ENCODE measurements at regions of chr10 and their contacts with region 1.

Region 1: GRCh38 chr10:122468926-122469781 is 7.8 kb downstream of the HTRA1 start:
- DNase-seq: peak; percentile 97
- H3K4me3 ChIP-seq: no peak overlapping the region
- CTCF ChIP-seq: no peak

Region 2: GRCh38 chr10:122362621-122363020 is 106.5 kb before region 1 on chr10:
- CTCF ChIA-PET with region 1: no interaction called
- POLR2A ChIA-PET with region 1: no interaction called
- DNase-seq: no peak
- H3K4me3 ChIP-seq: no peak overlapping the region
- CTCF ChIP-seq: no peak

Region 3: GRCh38 chr10:122495406-122496340 is 26.5 kb after region 1 on chr10:
- CTCF ChIA-PET with region 1: interaction called, 10 read pairs
- POLR2A ChIA-PET with region 1: interaction called, 10 read pairs
- DNase-seq: no peak
- H3K4me3 ChIP-seq: no peak overlapping the region
- CTCF ChIP-seq: no peak

Measured in AG04449 (cell line).